Esophagus squamous epithelium (tissue), 5 donors: ENCODE measurements at regions of chr3 and their contacts with region 1.

Region 1: GRCh38 chr3:17645072-17645698 is 97.2 kb downstream of the TBC1D5 start:
- DNase-seq: no peak
- H3K4me3 ChIP-seq: no peak overlapping the region
- H3K27ac ChIP-seq: no peak overlapping the region
- H3K4me1 ChIP-seq: no peaks in the 10 kb centered on the region
- H3K27me3 ChIP-seq: no peaks in the 10 kb centered on the region
- CTCF ChIP-seq: peak; percentile 28 to 74 (median 60)
- POLR2A ChIP-seq: no peak

Region 2: GRCh38 chr3:17055374-17056276 is 589.6 kb before region 1 on chr3:
- intact Hi-C with region 1: no loop called
- DNase-seq: no peak
- H3K4me3 ChIP-seq: no peak overlapping the region
- H3K27ac ChIP-seq: no peak overlapping the region
- H3K4me1 ChIP-seq: no peaks in the 10 kb centered on the region
- H3K27me3 ChIP-seq: no peaks in the 10 kb centered on the region
- CTCF ChIP-seq: no peak
- POLR2A ChIP-seq: no peak

Region 3: GRCh38 chr3:17707813-17708543 is 62.8 kb after region 1 on chr3:
- intact Hi-C with region 1: no loop called
- DNase-seq: no peak
- H3K4me3 ChIP-seq: no peak overlapping the region
- H3K27ac ChIP-seq: no peak overlapping the region
- H3K4me1 ChIP-seq: no peaks in the 10 kb centered on the region
- H3K27me3 ChIP-seq: no peaks in the 10 kb centered on the region
- CTCF ChIP-seq: no peak
- POLR2A ChIP-seq: no peak

Region 4: DNA sequence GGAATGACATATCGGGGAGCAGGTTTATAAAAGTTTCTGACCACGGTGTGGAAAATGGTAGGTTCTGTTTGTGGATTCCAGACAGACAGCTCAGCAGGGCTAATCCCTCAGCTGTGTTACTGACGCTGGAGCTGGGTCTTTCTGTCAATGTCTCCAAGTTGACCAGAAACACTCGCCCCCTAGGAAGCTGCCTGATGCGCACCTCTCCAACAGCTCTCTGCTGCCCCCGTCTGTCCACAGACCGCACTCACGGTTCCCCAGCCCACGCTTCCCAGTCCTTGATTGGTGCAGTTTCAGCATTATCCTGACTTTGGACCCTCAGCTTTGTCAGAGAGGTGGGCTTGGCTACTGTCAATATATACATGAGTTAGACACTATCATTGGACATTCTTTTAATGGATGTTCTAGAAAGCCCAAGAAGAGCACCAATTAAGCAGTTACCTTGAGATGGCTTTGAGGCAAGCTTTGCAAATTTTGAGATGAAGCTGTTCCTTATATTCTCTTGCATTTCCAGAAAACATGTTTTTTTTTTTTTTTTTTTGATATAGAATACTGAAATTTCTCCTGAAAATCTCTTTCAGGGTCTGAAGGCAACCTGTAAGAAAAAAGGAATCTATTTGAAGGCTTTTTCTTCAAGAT is 196.1 kb after region 1 on chr3:
- intact Hi-C with region 1: loop called (anchors 5 kb)
- DNase-seq: no peak
- H3K4me3 ChIP-seq: no peak overlapping the region
- H3K27ac ChIP-seq: no peak overlapping the region
- H3K4me1 ChIP-seq: no peaks in the 10 kb centered on the region
- H3K27me3 ChIP-seq: peaks cover 0 to 7% (median 0%) of the 10 kb centered on the region in 4 donors
- CTCF ChIP-seq: peak; percentile 72 to 89 (median 86)
- POLR2A ChIP-seq: no peak